ENCODE measurements at regions of chr16 and their contacts with region 1.

Region 1: GRCh38 chr16:81891736-81892357 is 112.8 kb downstream of the PLCG2 start:
- DNase-seq: no peak
- H3K4me3 ChIP-seq: no peak overlapping the region
- H3K27ac ChIP-seq: no peak overlapping the region
- H3K4me1 ChIP-seq: no peaks in the 10 kb centered on the region
- H3K27me3 ChIP-seq: no peaks in the 10 kb centered on the region
- CTCF ChIP-seq: no peak
- POLR2A ChIP-seq: no peak

Region 2: GRCh38 chr16:81863630-81864352 is 28.1 kb before region 1 on chr16:
- intact Hi-C with region 1: no loop called
- DNase-seq: no peak
- H3K4me3 ChIP-seq: no peak overlapping the region
- H3K27ac ChIP-seq: peak overlapping the region; percentile 48 to 89
- H3K4me1 ChIP-seq: no peaks in the 10 kb centered on the region
- H3K27me3 ChIP-seq: no peaks in the 10 kb centered on the region
- CTCF ChIP-seq: no peak
- POLR2A ChIP-seq: no peak

Region 3: GRCh38 chr16:81932668-81933067 is 40.8 kb after region 1 on chr16:
- intact Hi-C with region 1: loop called (anchors 1 kb)
- DNase-seq: no peak
- H3K4me3 ChIP-seq: no peak overlapping the region
- H3K27ac ChIP-seq: no peak overlapping the region
- H3K4me1 ChIP-seq: no peaks in the 10 kb centered on the region
- H3K27me3 ChIP-seq: no peaks in the 10 kb centered on the region
- CTCF ChIP-seq: no peak
- POLR2A ChIP-seq: no peak

Measured in breast epithelium (tissue), 4 donors.